Posterior vena cava (tissue), 2 donors: ENCODE measurements at regions of chr14 and their contacts with region 1.

Region 1: DNA sequence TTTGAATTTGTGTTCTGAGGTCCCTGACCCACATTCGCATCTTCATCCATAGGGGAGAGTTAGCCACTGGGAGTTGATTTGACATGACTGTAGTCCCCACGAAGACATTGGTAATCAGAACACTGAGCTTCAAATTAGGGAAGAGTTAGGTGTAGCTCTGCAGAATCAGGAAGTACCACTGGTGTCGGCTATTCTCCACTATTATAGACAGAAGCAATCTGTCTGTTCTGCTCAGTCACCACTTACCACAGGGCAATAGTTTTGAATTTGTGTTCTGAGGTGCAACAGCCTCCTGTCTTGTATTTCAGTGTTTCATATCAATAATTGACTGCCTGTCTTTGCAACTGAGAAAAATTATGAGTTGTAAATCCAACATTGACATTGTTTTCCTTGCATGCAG is 407.6 kb downstream of the LRFN5 start:
- DNase-seq: no peak

Region 2: DNA sequence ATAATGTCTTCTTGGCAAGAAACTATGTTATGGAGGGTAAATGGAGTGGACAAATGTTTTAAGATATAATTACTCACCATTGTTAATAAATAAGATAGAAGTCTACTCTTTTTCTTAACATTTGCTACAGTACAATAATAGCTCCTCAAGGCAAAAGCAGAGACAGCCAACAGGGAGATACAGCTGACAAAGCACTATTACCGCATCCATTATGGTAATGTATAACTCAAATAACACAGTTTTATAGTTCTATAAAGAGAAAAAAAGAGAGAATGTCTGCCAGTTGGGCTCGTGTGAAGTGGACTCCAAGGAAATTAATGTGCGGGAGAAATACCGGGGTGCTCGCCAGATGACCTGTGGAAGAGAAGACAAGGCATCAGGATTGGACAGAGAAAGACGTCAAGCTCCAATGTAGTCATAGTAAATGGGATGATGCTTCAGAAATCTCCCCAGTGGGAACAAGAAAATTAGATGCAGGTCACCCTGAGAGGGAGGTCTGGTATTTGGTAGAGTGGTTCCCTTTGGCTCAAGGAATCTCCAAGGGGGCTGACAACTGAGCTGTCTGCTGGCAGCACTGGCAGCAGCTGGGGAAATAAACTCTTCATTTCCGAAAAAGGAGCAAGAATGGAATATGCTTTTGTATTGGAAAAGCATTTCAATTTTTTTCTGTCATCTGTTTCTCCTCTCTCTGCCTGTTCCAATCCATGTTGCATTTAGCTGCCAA is 63.7 kb before region 1 on chr14:
- intact Hi-C with region 1: loop called in 1 of 2 experiments (anchors 2 kb)
- DNase-seq: no peak